WTC11 (cell line): ENCODE measurements at regions of chr12 and their contacts with region 1.

Region 1: DNA sequence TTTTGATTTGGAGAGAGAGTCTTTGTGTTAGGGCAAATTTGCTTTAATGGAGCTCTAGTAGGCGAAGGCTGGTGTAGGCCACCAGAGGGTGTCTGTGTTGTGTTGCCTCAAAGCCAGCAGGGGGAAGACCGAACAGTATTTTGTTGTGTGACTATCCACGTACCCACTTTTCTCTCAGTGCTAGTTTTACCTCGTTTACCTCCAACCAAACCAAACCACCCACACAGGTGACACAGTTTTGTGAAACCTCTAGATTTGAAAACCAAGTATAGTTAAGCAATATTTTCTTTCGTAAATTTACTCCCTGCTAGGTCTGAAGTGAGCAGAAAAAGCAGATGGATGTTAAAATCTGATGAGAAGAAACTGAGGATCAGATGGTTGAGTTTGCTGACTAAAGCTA is 36.3 kb upstream of the NPFF start:
- DNase-seq: peak; percentile 46
- ATAC-seq: peak; percentile 96
- H3K4me3 Mint-ChIP-seq: no peak overlapping the region
- H3K27ac Mint-ChIP-seq: peak overlapping the region; percentile 46
- H3K4me1 Mint-ChIP-seq: peaks cover 8% of the 10 kb centered on the region
- H3K27me3 Mint-ChIP-seq: no peaks in the 10 kb centered on the region
- CTCF ChIP-seq: peak; percentile 22; the same call in 1 of the 2 replicates

Region 2: GRCh38 chr12:53591301-53592206 is 48.0 kb after region 1 on chr12:
- CTCF ChIA-PET with region 1: interaction called, 10 read pairs
- POLR2A ChIA-PET with region 1: no interaction called
- DNase-seq: no peak
- ATAC-seq: no peak
- H3K4me3 Mint-ChIP-seq: no peak overlapping the region
- H3K27ac Mint-ChIP-seq: no peak overlapping the region; the same call in 1 of the 2 replicates
- H3K4me1 Mint-ChIP-seq: peaks cover 21% of the 10 kb centered on the region
- H3K27me3 Mint-ChIP-seq: no peaks in the 10 kb centered on the region
- CTCF ChIP-seq: no peak

Region 3: GRCh38 chr12:53625946-53626701 is 82.6 kb after region 1 on chr12 and contains the start of gene ATF7:
- CTCF ChIA-PET with region 1: interaction called, 13 read pairs
- POLR2A ChIA-PET with region 1: interaction called, 5 read pairs
- DNase-seq: peak; percentile 98
- ATAC-seq: peak; percentile 97
- H3K4me3 Mint-ChIP-seq: peak within 1 kb of the TSS; percentile 87
- H3K27ac Mint-ChIP-seq: peak within 1 kb of the TSS; percentile 95
- H3K4me1 Mint-ChIP-seq: peaks cover 31% of the 10 kb centered on the region
- H3K27me3 Mint-ChIP-seq: peaks cover 4% of the 10 kb centered on the region
- CTCF ChIP-seq: no peak
- total RNA-seq, gene ATF7: 16.3 to 20.3 TPM (median 19.7 TPM) in 3 replicates

Region 4: DNA sequence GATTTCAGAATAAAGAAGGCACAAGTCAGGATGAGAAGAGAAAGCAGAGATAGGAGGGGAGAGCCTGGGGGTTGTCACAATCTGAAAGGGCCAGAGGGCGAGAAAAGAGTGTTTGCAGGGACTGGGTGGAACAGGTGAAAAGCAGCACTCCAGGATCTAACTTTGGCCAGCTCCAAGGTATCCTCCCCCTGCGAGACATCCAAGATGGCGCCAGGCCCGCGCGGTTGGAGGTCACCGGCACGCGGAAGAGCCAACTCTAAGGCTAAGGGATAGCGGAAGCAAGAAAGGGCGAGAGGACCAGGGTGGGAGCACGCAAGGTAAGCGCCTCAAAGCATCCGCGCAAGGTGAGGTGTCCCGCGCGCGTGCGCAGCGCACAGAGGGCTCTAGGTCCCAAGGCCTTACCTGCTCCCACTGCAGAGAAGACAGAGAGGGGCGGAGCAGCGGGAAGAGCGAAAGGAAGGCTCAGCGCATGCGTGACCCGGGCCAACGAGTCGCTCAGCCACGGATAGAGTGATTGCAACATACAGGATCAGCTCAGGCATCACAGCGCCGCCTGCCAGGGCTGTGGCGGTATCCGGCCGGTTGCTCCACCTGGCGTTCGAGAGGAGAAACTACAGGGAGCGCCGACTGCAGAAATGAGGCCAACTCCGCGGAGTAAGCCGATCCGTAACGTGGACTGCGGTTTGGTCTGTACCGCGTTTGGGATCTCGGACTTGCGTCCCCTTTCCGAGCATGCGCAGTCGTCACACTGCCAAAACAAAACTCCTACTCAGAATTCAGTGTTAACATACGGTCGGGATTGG is 132.3 kb after region 1 on chr12 and contains the start of gene ATP5MC2:
- CTCF ChIA-PET with region 1: interaction called, 92 read pairs
- POLR2A ChIA-PET with region 1: interaction called, 7 read pairs
- DNase-seq: peak; percentile 97
- ATAC-seq: peak; percentile 88
- H3K4me3 Mint-ChIP-seq: peak within 1 kb of the TSS; percentile 95
- H3K27ac Mint-ChIP-seq: peak within 1 kb of the TSS; percentile 98
- H3K4me1 Mint-ChIP-seq: peaks cover 42% of the 10 kb centered on the region
- H3K27me3 Mint-ChIP-seq: no peaks in the 10 kb centered on the region; the same call in 1 of the 2 replicates
- CTCF ChIP-seq: peak; percentile 83
- total RNA-seq, gene ATP5MC2: 411 to 527 TPM (median 517 TPM) in 3 replicates

Region 5: DNA sequence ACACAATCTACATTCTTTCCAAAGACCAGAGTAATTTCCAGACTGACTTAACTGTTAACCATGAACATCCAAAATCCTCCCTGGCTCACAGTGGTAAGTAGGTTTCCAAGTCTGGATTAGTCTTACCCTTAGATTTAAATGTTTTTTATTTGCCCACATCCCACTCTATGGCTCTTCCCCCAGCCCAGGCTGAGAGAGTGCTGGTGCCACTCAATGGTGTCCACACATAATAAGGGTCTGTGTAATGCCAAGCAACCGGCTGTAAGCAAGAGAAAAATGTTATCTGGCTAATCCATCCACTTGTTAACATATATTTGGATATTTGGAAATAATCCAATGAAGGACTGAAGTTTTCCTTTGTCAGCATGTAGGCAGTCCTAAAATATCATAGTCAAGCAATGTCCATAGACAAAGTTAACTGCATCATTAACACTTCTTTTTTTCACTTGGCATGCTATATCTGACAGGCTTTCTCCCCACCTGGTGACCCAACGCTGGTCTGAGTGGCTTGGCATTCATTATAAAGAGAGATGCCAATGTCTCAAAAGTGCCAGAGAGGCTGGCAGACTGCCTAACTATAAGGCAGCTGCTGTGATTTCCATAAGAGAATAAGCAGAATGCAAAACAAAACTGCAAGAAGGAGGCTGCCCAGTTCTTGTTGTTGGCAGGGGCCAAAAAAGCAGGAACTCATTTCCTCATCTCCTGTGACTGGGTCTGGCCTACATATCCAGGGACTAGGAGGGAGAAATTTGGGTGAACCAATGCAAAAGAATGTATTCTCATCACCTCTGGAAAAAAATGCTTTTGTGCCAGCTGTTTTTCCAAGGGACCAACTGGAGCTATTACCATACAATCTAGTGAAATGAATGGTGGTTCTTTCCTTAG is 381.2 kb after region 1 on chr12:
- CTCF ChIA-PET with region 1: no interaction called
- POLR2A ChIA-PET with region 1: no interaction called
- DNase-seq: no peak
- ATAC-seq: no peak
- H3K4me3 Mint-ChIP-seq: no peak overlapping the region
- H3K27ac Mint-ChIP-seq: no peak overlapping the region
- H3K4me1 Mint-ChIP-seq: peaks cover 11% of the 10 kb centered on the region
- H3K27me3 Mint-ChIP-seq: peaks cover 98% of the 10 kb centered on the region
- CTCF ChIP-seq: no peak